ENCODE measurements at regions of chr2 and their contacts with region 1.

Region 1: DNA sequence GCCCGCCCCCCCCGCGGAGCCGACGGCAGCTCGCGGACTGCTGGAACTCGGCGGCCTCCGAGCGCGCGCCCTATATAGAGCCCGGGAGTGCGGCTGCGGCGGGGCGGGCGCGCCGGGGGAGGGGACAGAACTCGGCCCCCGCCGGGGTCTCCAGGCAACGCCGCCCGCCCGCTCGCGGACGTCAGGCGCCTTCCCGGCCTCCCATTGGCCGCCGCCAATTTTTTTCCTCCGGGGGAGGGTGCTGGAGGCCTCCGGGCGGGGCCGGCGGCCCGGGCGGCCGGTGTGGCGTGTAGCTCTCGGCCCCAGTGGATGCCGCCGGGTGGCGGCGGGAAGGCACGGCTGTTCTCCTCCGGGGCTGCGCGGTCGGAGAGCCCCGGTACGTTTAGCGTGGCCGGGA is at the start of gene ZFP36L2:
- DNase-seq: peak; percentile 95
- H3K4me3 Mint-ChIP-seq: peak within 1 kb of the TSS; percentile 90
- H3K27ac Mint-ChIP-seq: peak within 1 kb of the TSS; percentile 95
- H3K4me1 Mint-ChIP-seq: peaks cover 30% of the 10 kb centered on the region
- H3K27me3 Mint-ChIP-seq: no peaks in the 10 kb centered on the region
- total RNA-seq, gene ZFP36L2: 114 TPM in 2 replicates

Region 2: GRCh38 chr2:42828487-42829425 is 397.8 kb before region 1 on chr2:
- intact Hi-C with region 1: loop called (anchors 2 kb)
- DNase-seq: peak; percentile 56
- H3K4me3 Mint-ChIP-seq: no peak overlapping the region
- H3K27ac Mint-ChIP-seq: no peak overlapping the region
- H3K4me1 Mint-ChIP-seq: peaks cover 18% of the 10 kb centered on the region
- H3K27me3 Mint-ChIP-seq: peaks cover 7% of the 10 kb centered on the region

Region 3: DNA sequence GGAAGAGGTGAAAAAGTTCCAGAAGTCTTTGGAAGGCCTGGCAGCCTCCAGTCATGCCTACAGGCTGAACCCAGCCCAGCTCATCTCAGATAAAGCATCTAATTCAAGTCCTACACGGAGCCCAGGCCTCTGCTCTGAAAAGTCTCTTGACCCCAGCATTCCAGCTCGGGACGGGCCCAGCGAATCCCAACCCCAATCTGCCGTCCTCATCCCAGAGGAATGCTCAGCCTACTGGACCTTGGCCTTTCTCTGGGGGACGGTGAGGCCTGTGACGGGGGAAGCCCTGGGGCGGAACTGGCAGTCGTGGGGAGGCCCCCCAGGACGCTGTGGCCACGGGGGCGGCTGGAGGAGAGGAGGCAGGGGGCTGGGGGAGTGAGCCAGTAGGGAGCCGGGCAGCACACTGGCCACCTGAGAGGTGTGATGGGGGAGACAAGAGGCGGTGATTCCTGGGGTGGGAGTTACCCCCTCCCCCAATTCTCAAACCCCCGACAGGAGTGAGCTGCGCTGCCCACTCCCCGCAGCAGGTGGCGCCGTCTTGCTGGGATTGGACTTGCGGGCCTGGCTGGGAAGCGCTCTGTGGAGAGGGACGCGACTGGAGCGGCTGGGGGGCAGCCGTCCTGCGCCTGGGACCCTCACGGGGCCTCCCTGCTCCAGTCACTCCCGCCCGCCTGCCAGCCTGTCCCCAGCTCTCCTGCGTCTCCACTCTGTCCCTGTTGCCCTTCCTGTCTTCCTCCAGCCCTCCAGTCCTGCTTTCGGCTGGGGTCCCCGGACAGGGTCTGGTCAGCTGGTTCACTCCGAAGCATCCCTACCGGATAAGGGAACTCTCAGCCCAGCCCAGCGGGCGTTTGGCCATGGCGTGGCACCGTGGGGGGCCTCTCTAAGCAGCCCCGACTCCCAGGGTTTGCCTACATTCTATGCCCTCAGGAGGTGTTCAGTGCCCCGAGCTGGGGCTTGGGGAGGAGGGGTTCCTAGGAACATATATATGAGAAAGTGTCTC is 251.5 kb before region 1 on chr2:
- intact Hi-C with region 1: loop called (anchors 2 kb)
- DNase-seq: peak; percentile 22
- H3K4me3 Mint-ChIP-seq: no peak overlapping the region
- H3K27ac Mint-ChIP-seq: no peak overlapping the region
- H3K4me1 Mint-ChIP-seq: peaks cover 3% of the 10 kb centered on the region
- H3K27me3 Mint-ChIP-seq: peaks cover 10% of the 10 kb centered on the region

Region 4: GRCh38 chr2:43174368-43174916 is 52.1 kb before region 1 on chr2:
- intact Hi-C with region 1: loop called (anchors 1 kb)
- DNase-seq: peak; percentile 73
- H3K4me3 Mint-ChIP-seq: peak overlapping the region; percentile 38
- H3K27ac Mint-ChIP-seq: peak overlapping the region; percentile 91
- H3K4me1 Mint-ChIP-seq: peaks cover 69% of the 10 kb centered on the region
- H3K27me3 Mint-ChIP-seq: no peaks in the 10 kb centered on the region

Region 5: DNA sequence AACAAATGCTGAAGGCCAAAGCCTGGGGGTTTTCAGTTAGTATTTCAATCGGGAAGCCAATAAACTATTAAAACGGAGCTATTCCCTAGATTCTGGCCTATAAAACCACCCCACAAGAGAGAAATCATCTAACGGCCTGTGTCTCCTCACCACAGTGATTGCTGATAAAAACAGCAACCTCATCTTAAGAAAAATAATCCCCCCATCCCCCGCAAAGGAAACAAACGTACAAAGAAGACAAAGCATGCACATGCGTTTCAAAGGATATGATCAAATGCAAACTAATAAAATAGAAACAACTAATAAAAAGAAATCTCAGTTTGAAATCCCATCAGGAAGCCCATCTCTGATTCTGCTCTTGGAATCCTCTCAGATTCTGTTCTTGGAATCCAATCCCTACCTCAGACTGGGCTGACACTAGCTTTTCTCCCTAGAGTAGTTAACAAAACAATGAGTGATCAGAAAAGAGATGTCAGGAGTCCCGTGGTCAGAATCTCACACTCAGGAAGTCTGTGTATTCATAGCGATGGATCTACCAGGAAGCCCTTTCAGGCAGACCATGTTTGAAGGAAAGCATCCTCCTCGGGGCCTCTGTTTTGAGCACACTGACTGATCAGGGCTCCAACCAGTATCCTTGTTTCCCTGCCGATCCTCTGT is 218.6 kb after region 1 on chr2:
- intact Hi-C with region 1: no loop called
- DNase-seq: no peak
- H3K4me3 Mint-ChIP-seq: no peak overlapping the region
- H3K27ac Mint-ChIP-seq: no peak overlapping the region
- H3K4me1 Mint-ChIP-seq: peaks cover 8% of the 10 kb centered on the region
- H3K27me3 Mint-ChIP-seq: no peaks in the 10 kb centered on the region

Region 6: DNA sequence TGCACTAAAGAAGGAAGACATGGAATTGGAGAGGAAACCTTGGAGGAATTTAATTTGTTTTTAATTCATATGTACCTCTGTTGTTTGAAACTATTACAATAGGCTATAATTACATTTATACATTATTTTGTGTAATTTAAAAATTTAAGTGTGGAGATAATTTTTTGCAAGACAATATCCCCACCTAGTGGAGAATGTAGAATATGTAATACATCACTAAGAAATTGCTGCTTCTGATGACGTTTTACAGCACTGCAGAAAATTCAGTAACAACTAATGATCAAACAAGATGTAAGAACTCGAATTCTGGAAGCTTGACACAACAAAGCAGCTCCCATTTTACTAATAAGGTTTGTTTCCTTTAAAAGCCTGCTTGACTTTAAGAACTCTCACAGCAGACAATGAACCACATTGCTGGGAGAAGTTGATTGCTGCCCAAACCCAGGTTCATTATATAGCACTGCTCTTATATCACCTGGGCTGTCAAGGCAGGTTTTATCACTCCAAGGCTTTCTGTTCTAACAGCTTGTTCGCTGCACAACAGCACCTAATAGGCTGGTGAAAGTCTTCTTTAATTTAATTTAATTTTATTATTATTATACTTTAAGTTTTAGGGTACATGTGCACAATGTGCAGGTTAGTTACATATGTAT is 315.9 kb after region 1 on chr2:
- intact Hi-C with region 1: loop called (anchors 5 kb)
- DNase-seq: no peak
- H3K4me3 Mint-ChIP-seq: no peak overlapping the region
- H3K27ac Mint-ChIP-seq: no peak overlapping the region
- H3K4me1 Mint-ChIP-seq: peaks cover 19% of the 10 kb centered on the region
- H3K27me3 Mint-ChIP-seq: no peaks in the 10 kb centered on the region